Activated T-helper 1 cell treated with anti-CD3 and anti-CD28 coated beads, Interleukin-12 subunit alpha, Interleukin-12 subunit beta, Interleukin-2, Interleukin-4 antibody, amounts not matched to agents 30 ng/mL and 10 ng/mL and 1 ng/mL, durations not matched to agents 14 hours and 24 hours and 36 hours (primary cell): ENCODE measurements at regions of chr3 and their contacts with region 1.

Region 1: GRCh38 chr3:179562591-179563270 is at the start of gene ACTL6A:
- DNase-seq: peak; percentile 98
- H3K4me3 Mint-ChIP-seq: peak within 1 kb of the TSS; percentile 93
- H3K27ac Mint-ChIP-seq: peak within 1 kb of the TSS; percentile 99
- H3K4me1 Mint-ChIP-seq: peaks cover 34% of the 10 kb centered on the region
- H3K27me3 Mint-ChIP-seq: peaks cover 12% of the 10 kb centered on the region
- total RNA-seq, gene ACTL6A: 113 and 117 TPM in 2 replicates

Region 2: DNA sequence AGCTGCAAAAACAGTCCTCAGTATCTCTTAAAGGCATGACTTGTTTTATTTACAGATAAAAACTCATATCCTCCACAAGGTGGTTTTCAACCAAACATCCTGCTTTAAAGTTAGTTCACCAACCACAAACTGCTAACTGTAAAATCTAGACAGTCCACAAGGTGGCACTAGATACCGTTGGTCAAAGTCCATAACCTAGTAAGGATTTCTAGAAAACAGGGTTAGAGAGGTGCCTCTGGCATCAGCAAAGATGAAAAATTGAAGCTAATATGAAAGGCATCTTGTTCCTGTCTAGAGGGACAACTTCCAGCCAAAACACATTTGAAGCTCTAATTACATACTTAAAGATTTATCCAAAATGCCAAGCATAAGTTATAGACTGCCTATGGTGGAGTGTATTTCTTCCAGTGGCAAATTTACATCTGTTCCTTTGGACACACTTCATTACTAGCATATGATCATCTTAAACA is 547.1 kb before region 1 on chr3:
- intact Hi-C with region 1: loop called (anchors 1 kb)
- DNase-seq: peak; percentile 68
- H3K4me3 Mint-ChIP-seq: no peak overlapping the region
- H3K27ac Mint-ChIP-seq: peak overlapping the region; percentile 24
- H3K4me1 Mint-ChIP-seq: peaks cover 55% of the 10 kb centered on the region
- H3K27me3 Mint-ChIP-seq: peaks cover 7% of the 10 kb centered on the region

Region 3: GRCh38 chr3:179347345-179348194 is 215.2 kb before region 1 on chr3 and contains the start of gene MFN1:
- intact Hi-C with region 1: loop called (anchors 1 kb)
- DNase-seq: peak; percentile 87
- H3K4me3 Mint-ChIP-seq: peak within 1 kb of the TSS; percentile 98
- H3K27ac Mint-ChIP-seq: peak within 1 kb of the TSS; percentile 96
- H3K4me1 Mint-ChIP-seq: peaks cover 25% of the 10 kb centered on the region
- H3K27me3 Mint-ChIP-seq: no peaks in the 10 kb centered on the region
- total RNA-seq, gene MFN1: 29.5 and 37.7 TPM in 2 replicates

Region 4: GRCh38 chr3:179580992-179581391 is 18.3 kb after region 1 on chr3:
- intact Hi-C with region 1: loop called (anchors 2 kb)
- DNase-seq: no peak
- H3K4me3 Mint-ChIP-seq: no peak overlapping the region
- H3K27ac Mint-ChIP-seq: no peak overlapping the region
- H3K4me1 Mint-ChIP-seq: no peaks in the 10 kb centered on the region
- H3K27me3 Mint-ChIP-seq: no peaks in the 10 kb centered on the region

Region 5: DNA sequence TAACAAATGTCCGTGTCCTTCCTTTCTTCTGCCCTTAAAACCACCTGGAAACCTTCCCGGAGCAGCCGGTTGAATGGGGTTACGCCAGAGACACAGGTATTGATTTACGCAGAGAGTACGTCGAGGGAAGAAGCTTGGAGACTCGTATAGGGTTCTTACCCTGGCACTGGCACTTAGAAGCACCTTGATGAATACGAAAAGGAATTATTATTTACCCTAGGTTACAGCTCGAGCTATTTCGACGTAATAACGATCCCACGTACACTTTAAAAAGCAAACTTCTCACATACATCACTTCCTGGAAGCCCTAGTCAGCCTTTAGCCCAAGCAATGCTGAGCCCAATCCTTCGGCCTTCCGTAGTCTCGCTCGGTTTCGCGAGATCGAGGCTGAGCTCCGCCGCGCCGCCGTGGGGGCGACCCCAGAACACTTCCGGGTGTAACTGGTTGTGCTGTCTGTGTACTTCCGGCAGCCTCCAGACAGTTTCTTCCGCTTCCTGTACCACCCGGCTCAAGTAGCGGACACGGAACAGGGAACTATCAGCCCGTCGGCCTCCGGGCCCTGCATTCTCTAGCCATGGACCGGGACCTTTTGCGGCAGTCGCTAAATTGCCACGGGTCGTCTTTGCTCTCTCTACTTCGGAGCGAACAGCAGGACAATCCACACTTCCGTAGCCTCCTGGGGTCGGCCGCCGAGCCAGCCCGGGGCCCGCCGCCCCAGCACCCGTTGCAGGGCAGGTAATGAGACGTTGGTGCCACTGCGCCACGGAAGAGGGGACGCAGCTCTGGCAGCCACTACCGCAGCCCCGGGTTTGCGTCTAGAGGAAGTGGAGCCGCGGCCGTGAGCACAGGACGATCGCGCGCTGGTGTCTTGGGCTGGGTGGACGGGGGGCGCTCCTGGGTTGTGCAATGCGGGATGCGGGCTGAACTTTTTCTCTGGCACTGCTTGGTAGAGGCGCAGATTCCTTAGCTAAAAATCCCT is 1039.2 kb after region 1 on chr3 and contains the start of gene TTC14:
- intact Hi-C with region 1: loop called (anchors 5 kb)
- DNase-seq: peak; percentile 92
- H3K4me3 Mint-ChIP-seq: peak within 1 kb of the TSS; percentile 91
- H3K27ac Mint-ChIP-seq: peak within 1 kb of the TSS; percentile 95
- H3K4me1 Mint-ChIP-seq: peaks cover 23% of the 10 kb centered on the region
- H3K27me3 Mint-ChIP-seq: peaks cover 20% of the 10 kb centered on the region
- total RNA-seq, gene TTC14: 43.9 and 50.0 TPM in 2 replicates